Mammary epithelial cell (primary cell): ENCODE measurements at regions of chr20 and their contacts with region 1.

Region 1: DNA sequence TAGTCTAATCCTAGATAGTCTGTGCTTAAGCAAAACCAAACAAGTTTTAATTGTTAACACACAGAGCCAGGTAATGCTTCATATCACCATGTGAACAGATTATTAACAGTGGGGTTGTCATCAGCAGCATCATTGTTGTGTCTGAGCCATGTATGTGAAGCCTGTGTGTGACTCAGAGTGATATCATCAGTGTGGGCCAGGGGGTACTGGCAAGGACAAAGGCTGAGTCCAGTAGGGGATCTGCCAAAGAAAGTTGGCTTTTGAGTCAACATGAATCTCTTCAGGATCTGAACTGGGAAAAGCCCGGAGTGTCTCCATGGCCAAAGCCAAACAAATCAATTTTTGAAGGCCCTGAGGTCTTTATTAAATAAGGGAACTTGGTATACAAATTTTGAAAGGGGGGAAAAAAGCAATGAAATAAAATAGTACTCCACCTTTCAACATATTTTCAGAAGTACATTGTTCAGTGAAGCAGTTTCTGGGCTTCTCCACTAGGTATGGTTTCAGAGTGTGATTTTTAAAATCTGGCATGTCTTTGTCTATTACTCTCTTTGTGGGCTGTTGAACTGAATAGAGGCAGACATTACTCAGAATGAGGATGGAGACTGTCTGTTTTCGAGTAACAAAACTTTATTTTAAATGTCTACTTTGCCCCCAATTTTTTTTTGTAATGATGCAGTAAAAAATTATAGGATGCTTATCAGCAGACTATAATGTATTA is 444.2 kb upstream of the JAG1 start:
- DNase-seq: peak; percentile 99
- H3K4me3 ChIP-seq: no peak overlapping the region
- H3K27ac ChIP-seq: peak overlapping the region; percentile 99
- H3K4me1 ChIP-seq: peaks cover 33% of the 10 kb centered on the region
- H3K27me3 ChIP-seq: no peaks in the 10 kb centered on the region
- CTCF ChIP-seq: peak in 1 of 2 donors; percentile 0

Region 2: GRCh38 chr20:10731190-10731965 is 386.6 kb before region 1 on chr20:
- CTCF ChIA-PET with region 1: no interaction called
- dilution Hi-C with region 1: no loop called
- in situ Hi-C with region 1: no loop called
- intact Hi-C with region 1: loop called (anchors 10 kb)
- DNase-seq: peak; percentile 64
- H3K4me3 ChIP-seq: no peak overlapping the region
- H3K27ac ChIP-seq: peak overlapping the region; percentile 64
- H3K4me1 ChIP-seq: peaks cover 47% of the 10 kb centered on the region
- H3K27me3 ChIP-seq: no peaks in the 10 kb centered on the region
- CTCF ChIP-seq: no peak

Region 3: GRCh38 chr20:10922941-10923340 is 195.0 kb before region 1 on chr20:
- CTCF ChIA-PET with region 1: no interaction called
- dilution Hi-C with region 1: no loop called
- in situ Hi-C with region 1: no loop called
- intact Hi-C with region 1: loop called (anchors 10 kb)
- DNase-seq: peak; percentile 80
- H3K4me3 ChIP-seq: no peak overlapping the region
- H3K27ac ChIP-seq: peak overlapping the region; percentile 64
- H3K4me1 ChIP-seq: peaks cover 56% of the 10 kb centered on the region
- H3K27me3 ChIP-seq: no peaks in the 10 kb centered on the region
- CTCF ChIP-seq: no peak

Region 4: DNA sequence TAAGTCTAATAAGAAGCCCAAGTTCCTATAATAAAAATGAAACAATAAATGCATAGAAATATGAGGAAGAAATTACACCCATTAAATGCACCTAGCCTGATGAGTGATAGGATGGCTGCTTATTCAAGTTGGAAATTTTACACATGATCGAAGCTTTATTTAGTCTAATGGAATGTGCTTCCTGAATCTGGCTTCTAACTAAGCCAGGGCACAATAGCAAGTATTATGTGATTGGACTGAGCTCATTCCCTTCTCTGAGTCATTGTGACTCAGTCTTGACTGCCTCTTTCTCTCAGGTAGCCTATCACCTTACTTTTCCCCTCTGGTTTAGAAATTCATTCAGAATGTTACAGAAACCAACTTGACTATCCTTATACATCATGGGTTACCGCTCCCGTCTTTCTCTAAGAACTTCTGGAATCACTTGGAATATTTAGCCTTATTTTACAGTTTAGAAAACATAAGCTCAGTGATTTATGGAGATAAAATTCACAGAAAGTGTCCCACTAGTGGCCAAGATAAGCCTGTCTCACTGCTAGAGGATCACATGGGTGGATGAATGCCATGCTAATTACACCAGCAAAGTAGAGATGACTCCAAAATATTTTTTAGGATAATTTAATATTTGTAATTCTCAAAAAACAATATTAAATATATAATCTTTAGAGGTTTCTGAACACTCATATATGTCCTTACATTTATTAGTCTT is 61.1 kb after region 1 on chr20:
- CTCF ChIA-PET with region 1: no interaction called
- dilution Hi-C with region 1: no loop called
- in situ Hi-C with region 1: no loop called
- intact Hi-C with region 1: loop called (anchors 5 kb)
- DNase-seq: peak; percentile 98
- H3K4me3 ChIP-seq: peak overlapping the region in 1 of 3 experiments; percentile 22
- H3K27ac ChIP-seq: peak overlapping the region; percentile 92
- H3K4me1 ChIP-seq: peaks cover 17% of the 10 kb centered on the region
- H3K27me3 ChIP-seq: no peaks in the 10 kb centered on the region
- CTCF ChIP-seq: peak; percentile 36 to 38

Region 5: GRCh38 chr20:11193241-11193640 is 75.3 kb after region 1 on chr20:
- CTCF ChIA-PET with region 1: no interaction called
- dilution Hi-C with region 1: loop called (anchors 5 kb)
- in situ Hi-C with region 1: no loop called
- intact Hi-C with region 1: no loop called
- DNase-seq: peak; percentile 90
- H3K4me3 ChIP-seq: no peak overlapping the region
- H3K27ac ChIP-seq: no peak overlapping the region
- H3K4me1 ChIP-seq: peaks cover 24% of the 10 kb centered on the region
- H3K27me3 ChIP-seq: no peaks in the 10 kb centered on the region
- CTCF ChIP-seq: no peak

Region 6: DNA sequence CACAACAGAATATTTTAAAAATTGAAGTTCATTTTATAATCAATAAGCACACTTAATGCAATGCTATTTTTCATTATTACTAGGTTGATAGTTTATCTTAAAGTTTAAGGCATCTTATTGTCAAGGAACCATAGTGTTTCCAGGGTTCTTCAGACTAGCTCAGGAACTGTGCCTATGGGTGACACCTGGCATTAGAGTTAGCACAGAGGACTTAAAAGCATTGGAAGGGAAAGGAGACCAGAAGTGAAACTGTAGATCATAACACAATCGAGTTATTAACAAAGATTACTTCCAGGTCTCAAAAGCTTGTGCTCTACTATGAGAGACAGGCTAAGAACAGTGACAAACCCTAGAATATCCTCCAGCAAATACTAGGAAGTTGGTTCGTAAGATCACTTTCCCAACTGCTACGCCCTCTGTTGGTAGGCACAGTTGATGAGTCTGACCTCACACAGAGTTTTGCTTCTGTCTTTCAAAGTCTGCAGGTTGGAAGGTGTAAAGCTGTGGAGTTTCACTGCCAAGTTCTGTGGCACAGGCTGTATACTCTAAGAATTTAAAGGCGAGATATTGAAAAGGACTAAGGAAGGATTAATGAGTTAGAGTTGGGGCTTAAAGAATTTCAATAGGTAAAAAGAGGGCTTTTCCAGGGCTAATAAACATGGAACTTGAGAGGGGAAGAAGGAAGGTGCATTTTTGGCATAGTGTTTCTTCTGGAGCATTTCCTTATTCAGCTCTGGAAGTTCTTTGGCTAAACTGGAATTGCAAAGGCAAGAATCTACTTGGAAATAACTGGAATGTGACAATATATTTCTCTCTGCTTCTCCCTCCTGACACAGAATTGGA is 87.2 kb after region 1 on chr20:
- CTCF ChIA-PET with region 1: no interaction called
- dilution Hi-C with region 1: no loop called
- in situ Hi-C with region 1: no loop called
- intact Hi-C with region 1: no loop called
- DNase-seq: peak; percentile 69
- H3K4me3 ChIP-seq: no peak overlapping the region
- H3K27ac ChIP-seq: peak overlapping the region; percentile 65
- H3K4me1 ChIP-seq: peaks cover 46% of the 10 kb centered on the region
- H3K27me3 ChIP-seq: no peaks in the 10 kb centered on the region
- CTCF ChIP-seq: peak; percentile 84 to 95

Region 7: GRCh38 chr20:11454966-11455799 is 337.2 kb after region 1 on chr20:
- CTCF ChIA-PET with region 1: no interaction called
- dilution Hi-C with region 1: no loop called
- in situ Hi-C with region 1: no loop called
- intact Hi-C with region 1: loop called (anchors 10 kb)
- DNase-seq: peak; percentile 86
- H3K4me3 ChIP-seq: peak overlapping the region; percentile 33 to 48 (median 37)
- H3K27ac ChIP-seq: peak overlapping the region; percentile 93
- H3K4me1 ChIP-seq: peaks cover 71% of the 10 kb centered on the region
- H3K27me3 ChIP-seq: no peaks in the 10 kb centered on the region
- CTCF ChIP-seq: no peak